T-cell (primary cell): ENCODE measurements at regions of chr1 and their contacts with region 1.

Region 1: DNA sequence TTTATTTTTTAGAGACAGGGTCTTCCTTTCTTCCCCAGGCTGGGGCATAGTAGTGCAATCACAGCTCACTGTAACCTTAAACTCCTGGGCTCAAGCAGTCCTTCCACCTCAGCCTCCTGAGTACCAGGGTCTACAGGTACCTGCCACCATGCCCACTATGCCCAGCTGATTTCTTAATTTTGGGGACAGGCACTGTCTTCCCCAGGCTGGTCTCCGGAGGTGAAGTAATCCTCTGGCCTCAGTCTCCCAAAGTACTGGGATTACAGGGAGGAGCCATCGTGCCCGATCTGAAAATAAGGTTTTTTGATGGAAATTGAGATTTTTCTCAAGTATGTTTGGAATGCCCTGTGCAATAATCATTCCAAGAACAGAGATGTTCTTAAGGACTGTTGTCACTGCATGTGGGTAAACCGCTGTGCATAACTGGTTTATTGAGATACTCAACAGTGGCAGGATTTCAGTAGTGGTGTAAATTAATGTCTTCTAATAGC is 934 bp upstream of the MSH4 start:
- DNase-seq: no peak
- ATAC-seq: peak in 2 of 4 experiments; percentile 12 to 38
- H3K4me3 ChIP-seq: no peak overlapping the region
- H3K4me3 Mint-ChIP-seq: no peak overlapping the region
- H3K27ac ChIP-seq: no peak overlapping the region
- H3K27ac Mint-ChIP-seq: no peak overlapping the region
- H3K4me1 ChIP-seq: peaks cover 0 to 3% of the 10 kb centered on the region in 2 experiments
- H3K4me1 Mint-ChIP-seq: peaks cover 23 to 30% (median 25%) of the 10 kb centered on the region in 3 donors
- H3K27me3 ChIP-seq: no peaks in the 10 kb centered on the region
- H3K27me3 Mint-ChIP-seq: no peaks in the 10 kb centered on the region

Region 2: DNA sequence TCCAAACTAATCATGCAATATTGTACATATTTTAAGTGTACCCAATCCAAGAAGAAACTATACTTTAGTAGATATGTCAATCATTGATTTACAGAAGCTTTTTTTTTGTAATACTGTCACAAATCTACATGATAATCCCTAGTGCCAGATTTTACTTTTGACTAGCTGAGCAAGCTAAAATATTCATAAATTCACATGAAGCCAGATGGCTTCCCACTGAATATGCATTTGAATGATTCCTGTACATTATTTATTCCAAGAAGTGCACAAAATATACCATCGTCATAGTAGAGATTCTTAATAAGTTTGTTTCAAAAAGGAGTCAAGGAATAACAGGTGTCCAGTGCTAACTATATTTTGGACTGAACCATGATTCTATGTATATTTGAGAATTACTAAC is 1580.5 kb before region 1 on chr1:
- CTCF ChIA-PET with region 1: no interaction called
- POLR2A ChIA-PET with region 1: interaction called in 1 of 2 experiments, 12 read pairs
- DNase-seq: no peak
- ATAC-seq: no peak
- H3K4me3 ChIP-seq: no peak overlapping the region
- H3K4me3 Mint-ChIP-seq: no peak overlapping the region
- H3K27ac ChIP-seq: no peak overlapping the region
- H3K27ac Mint-ChIP-seq: no peak overlapping the region
- H3K4me1 ChIP-seq: no peaks in the 10 kb centered on the region
- H3K4me1 Mint-ChIP-seq: no peaks in the 10 kb centered on the region
- H3K27me3 ChIP-seq: no peaks in the 10 kb centered on the region
- H3K27me3 Mint-ChIP-seq: no peaks in the 10 kb centered on the region